ENCODE measurements at regions of chr10 and their contacts with region 1.

Region 1: GRCh38 chr10:30870896-30871295 is 160.8 kb downstream of the ZNF438 start:
- DNase-seq: no peak
- CTCF ChIP-seq: no peak

Region 2: GRCh38 chr10:30656233-30656632 is 214.7 kb before region 1 on chr10:
- CTCF ChIA-PET with region 1: no interaction called
- POLR2A ChIA-PET with region 1: no interaction called
- DNase-seq: no peak
- CTCF ChIP-seq: no peak

Region 3: GRCh38 chr10:30829909-30830308 is 41.0 kb before region 1 on chr10:
- CTCF ChIA-PET with region 1: no interaction called
- POLR2A ChIA-PET with region 1: no interaction called
- DNase-seq: no peak
- CTCF ChIP-seq: no peak

Region 4: DNA sequence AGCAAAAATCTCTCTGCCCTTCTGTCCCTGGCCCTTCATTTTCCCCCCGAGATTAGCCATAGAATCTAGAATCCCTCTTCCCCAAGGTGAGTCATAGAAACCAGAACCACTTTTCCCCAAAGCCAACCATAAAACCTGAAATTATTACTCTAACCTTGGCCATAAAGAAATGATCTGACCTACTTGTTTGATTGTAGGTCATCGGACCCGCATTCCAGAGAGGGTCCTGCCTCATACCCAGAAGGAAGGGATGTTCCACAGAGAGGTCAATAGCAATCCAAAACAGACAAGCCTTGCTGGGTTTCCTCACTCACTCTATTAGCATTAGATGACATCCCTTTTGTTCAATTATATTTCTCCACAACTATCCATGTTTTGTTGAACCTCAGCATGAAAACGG is 10.9 kb before region 1 on chr10:
- CTCF ChIA-PET with region 1: interaction called, 10 read pairs
- POLR2A ChIA-PET with region 1: no interaction called
- DNase-seq: no peak
- CTCF ChIP-seq: no peak

Measured in GM10248 (cell line).